Right ventricle myocardium superior (tissue), 1 donor: ENCODE measurements at regions of chr2 and their contacts with region 1.

Region 1: GRCh38 chr2:198309673-198310280 is 505.4 kb downstream of the PLCL1 start:
- DNase-seq: no peak
- ATAC-seq: no peak

Region 2: DNA sequence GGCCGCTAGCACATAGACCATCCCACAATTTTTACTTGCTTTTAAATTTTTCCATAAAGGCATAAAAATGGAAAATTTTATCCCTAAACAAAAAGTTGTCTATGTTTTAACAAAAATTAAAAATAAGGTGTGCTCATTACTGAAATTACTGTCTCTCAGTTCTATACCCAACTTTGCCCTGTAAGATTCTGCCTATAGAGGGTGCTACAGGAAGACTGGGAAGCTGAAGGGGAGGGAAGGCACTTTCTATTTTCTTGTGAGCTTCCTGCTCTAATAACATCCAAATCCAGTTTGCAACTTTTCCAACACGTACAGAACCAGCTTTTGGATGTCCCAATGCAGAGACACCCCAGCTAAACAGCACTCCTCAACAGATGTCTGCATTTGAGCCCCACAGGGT is 161.5 kb after region 1 on chr2:
- intact Hi-C with region 1: no loop called
- DNase-seq: no peak
- ATAC-seq: no peak

Region 3: GRCh38 chr2:199488772-199489400 is 1179.1 kb after region 1 on chr2:
- intact Hi-C with region 1: loop called (anchors 10 kb)
- DNase-seq: no peak
- ATAC-seq: no peak

Region 4: DNA sequence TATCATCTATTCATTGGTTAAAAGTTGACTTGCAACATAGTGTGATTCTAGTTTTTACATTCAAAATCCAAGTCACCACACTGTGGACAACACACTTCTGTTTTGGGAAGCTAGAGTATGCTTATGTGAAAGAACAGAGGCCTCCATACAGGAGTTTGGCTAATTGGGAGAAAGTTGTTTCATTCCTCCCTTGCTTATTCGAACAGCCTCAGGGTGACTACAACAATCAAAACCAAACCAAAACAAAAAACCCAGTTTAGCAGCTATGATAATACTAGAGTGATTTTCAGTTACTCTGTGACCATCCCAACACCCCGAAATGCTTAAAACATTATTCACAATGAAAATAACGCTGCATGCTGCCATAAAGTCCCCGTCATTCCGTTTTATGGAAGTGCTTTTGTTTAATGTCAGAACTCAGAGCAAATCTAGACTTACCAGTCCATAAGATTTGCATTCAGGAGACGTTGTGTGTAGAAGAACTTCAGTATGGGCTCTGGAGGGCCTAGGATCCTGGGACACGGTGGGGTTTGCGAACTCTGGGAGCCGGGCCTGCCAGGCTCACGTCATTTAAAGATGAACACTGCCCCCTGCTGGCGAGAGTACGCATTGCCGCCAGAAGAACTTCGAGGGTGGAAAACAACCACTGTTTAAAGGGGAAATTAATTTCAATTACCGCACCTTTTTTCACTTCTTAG is 1429.8 kb after region 1 on chr2:
- intact Hi-C with region 1: loop called (anchors 5 kb)
- DNase-seq: peak; percentile 80
- ATAC-seq: peak; percentile 71